Activated B cell treated with CpG ODN at 0.5 μM for 24 hours (primary cell): ENCODE measurements at regions of chr18 and their contacts with region 1.

Region 1: DNA sequence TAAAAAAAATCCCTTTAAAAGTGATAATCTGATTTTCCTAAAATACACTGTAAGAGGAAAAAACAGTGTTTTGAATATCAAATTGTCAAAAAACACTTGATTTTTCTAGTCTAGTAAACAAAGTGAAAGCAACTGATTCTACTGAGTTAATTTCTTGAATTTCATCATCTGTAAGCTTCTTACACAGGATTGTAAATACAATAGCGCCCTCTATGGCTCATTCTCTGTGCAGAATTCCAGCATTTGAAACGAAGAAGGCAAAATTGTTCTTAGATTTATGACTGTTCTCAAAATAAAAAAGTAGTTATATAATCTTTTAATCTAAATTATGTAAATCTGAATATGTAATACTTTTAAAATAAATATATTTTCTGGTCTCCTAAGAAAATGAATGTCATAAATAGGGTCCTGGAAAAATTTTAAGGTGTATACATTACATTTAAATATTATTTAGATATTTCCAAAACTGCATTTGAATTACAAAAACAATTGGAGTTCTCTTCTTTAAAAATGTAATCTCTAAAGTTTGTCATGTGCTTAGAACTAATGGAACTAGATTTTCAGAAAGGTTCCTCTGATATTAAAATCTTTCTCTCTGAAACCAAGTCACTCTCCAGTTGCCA is 176.9 kb upstream of the MC4R start:
- DNase-seq: no peak
- ATAC-seq: no peak
- H3K4me3 Mint-ChIP-seq: no peak overlapping the region
- H3K27ac Mint-ChIP-seq: no peak overlapping the region
- H3K4me1 Mint-ChIP-seq: no peaks in the 10 kb centered on the region
- H3K27me3 Mint-ChIP-seq: no peaks in the 10 kb centered on the region
- CTCF ChIP-seq: peak; percentile 78

Region 2: DNA sequence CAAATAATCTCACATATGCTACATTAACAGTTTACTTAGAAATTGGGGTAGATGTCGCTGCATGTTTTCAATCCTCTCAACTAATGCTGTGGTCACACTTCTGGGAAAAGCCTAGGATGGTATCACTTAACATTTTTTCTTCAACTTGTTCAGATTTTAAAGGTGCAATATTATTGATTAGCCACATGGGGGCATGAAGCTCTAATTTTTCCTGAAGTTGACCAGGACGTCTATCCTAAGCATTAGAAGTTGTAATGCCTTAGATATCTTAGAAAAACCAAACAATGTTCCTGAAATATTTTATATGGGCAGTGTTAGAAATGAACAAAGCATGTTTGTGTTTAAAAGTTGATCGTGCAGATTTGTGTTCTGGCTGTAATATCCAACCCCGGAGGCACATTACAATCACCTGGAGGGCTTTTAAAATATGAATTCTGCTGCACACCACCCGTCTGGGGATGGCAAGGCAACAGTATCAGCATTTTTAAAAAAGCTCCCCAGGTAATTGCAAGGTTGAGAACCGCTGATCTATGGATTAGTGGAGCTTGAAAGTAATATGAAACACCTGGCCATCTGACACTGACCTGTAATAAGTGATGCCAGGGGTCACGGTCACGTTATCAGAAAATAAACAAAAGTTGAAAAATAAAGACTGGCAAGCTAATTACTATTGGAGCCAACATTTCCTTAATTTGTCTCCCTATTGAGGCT is 1089.9 kb before region 1 on chr18:
- CTCF ChIA-PET with region 1: interaction called, 30 read pairs
- POLR2A ChIA-PET with region 1: no interaction called
- intact Hi-C with region 1: loop called (anchors 1 kb)
- DNase-seq: no peak
- ATAC-seq: no peak
- H3K4me3 Mint-ChIP-seq: no peak overlapping the region
- H3K27ac Mint-ChIP-seq: no peak overlapping the region
- H3K4me1 Mint-ChIP-seq: no peaks in the 10 kb centered on the region
- H3K27me3 Mint-ChIP-seq: peaks cover 7% of the 10 kb centered on the region
- CTCF ChIP-seq: peak; percentile 51

Region 3: DNA sequence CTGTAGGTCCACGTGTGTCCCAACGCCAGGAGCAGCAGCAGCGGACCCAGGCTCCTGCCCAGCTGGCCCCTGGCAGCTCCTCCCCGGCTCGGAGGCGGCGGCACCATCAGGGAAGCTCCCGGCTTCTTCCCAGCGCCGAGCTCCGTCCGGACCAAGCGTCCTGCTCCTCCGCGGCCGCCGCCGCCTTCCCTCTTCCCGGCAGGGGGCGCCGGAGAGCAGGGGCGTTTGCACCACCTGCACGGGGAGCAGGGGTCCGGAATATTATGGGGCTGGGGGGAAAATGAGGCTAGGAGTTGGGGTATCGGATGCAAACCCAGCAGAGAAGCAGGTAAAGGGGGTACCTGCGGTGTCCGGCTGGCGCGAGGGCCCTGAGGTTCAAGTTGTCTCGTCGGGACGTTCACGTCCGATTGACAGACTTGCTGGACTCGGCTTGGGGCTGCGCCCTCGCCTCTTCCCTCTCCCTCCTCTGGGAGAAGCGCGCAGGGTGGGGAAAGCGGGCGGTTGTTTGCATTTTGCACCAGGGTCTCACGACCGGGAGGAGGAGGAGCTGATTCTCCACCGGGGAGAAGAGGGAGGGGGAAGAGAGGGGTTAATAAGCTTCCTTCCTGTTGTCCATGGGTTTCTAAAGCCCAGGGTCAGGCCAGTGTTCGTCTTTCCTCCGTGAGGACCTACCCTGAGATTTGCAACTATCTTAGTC is 852.1 kb before region 1 on chr18 and contains the start of gene CCBE1:
- CTCF ChIA-PET with region 1: interaction called, 3 read pairs
- POLR2A ChIA-PET with region 1: no interaction called
- intact Hi-C with region 1: loop called (anchors 2 kb)
- DNase-seq: no peak
- ATAC-seq: no peak
- H3K4me3 Mint-ChIP-seq: peak within 1 kb of the TSS; percentile 8
- H3K27ac Mint-ChIP-seq: no peak within 1 kb of the TSS
- H3K4me1 Mint-ChIP-seq: peaks cover 12% of the 10 kb centered on the region
- H3K27me3 Mint-ChIP-seq: peaks cover 52% of the 10 kb centered on the region
- CTCF ChIP-seq: no peak
- total RNA-seq, gene CCBE1: 0.04 TPM in 1 of 2 replicates, not detected in the other

Region 4: GRCh38 chr18:59837586-59837985 is 711.9 kb before region 1 on chr18:
- CTCF ChIA-PET with region 1: interaction called, 5 read pairs
- POLR2A ChIA-PET with region 1: no interaction called
- intact Hi-C with region 1: loop called (anchors 1 kb)
- DNase-seq: no peak
- ATAC-seq: peak; percentile 69
- H3K4me3 Mint-ChIP-seq: no peak overlapping the region
- H3K27ac Mint-ChIP-seq: no peak overlapping the region
- H3K4me1 Mint-ChIP-seq: peaks cover 27% of the 10 kb centered on the region
- H3K27me3 Mint-ChIP-seq: no peaks in the 10 kb centered on the region
- CTCF ChIP-seq: peak; percentile 47

Region 5: DNA sequence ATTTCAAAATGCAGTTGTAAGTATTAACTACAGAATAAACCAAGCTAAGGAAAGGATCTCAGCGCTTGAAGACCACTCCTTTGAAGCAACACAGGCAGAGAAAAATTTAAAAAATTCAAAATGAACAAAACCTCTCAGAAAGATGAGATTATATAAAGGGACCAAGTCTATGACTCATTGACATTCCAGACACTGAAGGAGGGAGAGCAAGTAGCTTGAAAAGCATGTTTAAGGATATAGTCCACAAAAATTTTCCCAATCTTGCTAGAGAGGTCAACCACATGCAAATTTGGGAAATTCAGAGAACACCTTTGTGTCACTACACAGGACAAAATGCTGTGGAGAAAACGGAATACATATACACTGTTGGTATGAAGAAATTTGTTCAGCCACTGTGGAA is 64.2 kb before region 1 on chr18:
- CTCF ChIA-PET with region 1: no interaction called
- POLR2A ChIA-PET with region 1: no interaction called
- intact Hi-C with region 1: no loop called
- DNase-seq: no peak
- ATAC-seq: no peak
- H3K4me3 Mint-ChIP-seq: no peak overlapping the region
- H3K27ac Mint-ChIP-seq: no peak overlapping the region
- H3K4me1 Mint-ChIP-seq: no peaks in the 10 kb centered on the region
- H3K27me3 Mint-ChIP-seq: peaks cover 2% of the 10 kb centered on the region
- CTCF ChIP-seq: no peak

Region 6: DNA sequence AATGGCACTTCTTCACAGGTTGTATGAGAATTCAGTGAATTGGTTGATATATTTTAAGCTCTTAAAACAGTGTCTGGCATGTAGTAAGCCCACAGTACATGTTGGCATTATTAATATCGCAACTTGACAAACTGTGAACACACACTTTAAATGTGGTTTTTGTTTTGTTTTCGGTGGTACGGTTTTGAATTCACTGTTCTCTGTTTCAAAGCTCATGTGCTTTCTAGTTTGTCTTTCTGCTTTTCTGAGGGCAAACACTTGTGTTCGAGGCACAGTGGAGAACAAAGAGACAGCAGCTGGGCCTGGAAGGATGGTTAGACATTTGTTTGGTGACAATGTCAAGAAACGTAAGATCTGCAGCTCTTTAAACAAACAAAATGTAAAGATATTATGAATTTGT is 99.7 kb after region 1 on chr18:
- CTCF ChIA-PET with region 1: no interaction called
- POLR2A ChIA-PET with region 1: no interaction called
- intact Hi-C with region 1: no loop called
- DNase-seq: no peak
- ATAC-seq: no peak
- H3K4me3 Mint-ChIP-seq: no peak overlapping the region
- H3K27ac Mint-ChIP-seq: no peak overlapping the region
- H3K4me1 Mint-ChIP-seq: no peaks in the 10 kb centered on the region
- H3K27me3 Mint-ChIP-seq: no peaks in the 10 kb centered on the region
- CTCF ChIP-seq: no peak

Region 7: GRCh38 chr18:61589713-61590065 is 1040.2 kb after region 1 on chr18:
- CTCF ChIA-PET with region 1: no interaction called
- POLR2A ChIA-PET with region 1: no interaction called
- intact Hi-C with region 1: no loop called
- DNase-seq: no peak
- ATAC-seq: no peak
- H3K4me3 Mint-ChIP-seq: no peak overlapping the region
- H3K27ac Mint-ChIP-seq: no peak overlapping the region
- H3K4me1 Mint-ChIP-seq: no peaks in the 10 kb centered on the region
- H3K27me3 Mint-ChIP-seq: no peaks in the 10 kb centered on the region
- CTCF ChIP-seq: no peak